ENCODE measurements at regions of chr15 and their contacts with region 1.

Region 1: GRCh38 chr15:40108855-40109735 is at the start of gene BMF:
- DNase-seq: peak; percentile 96
- ATAC-seq: peak; percentile 68
- H3K4me3 ChIP-seq: peak within 1 kb of the TSS; percentile 57 to 88 (median 86)
- H3K4me3 Mint-ChIP-seq: peak within 1 kb of the TSS; percentile 90
- H3K27ac ChIP-seq: peak within 1 kb of the TSS; percentile 97 to 98
- H3K27ac Mint-ChIP-seq: peak within 1 kb of the TSS; percentile 97
- H3K4me1 ChIP-seq: peaks cover 47 to 56% of the 10 kb centered on the region in 2 donors
- H3K4me1 Mint-ChIP-seq: peaks cover 57% of the 10 kb centered on the region
- H3K27me3 ChIP-seq: no peaks in the 10 kb centered on the region
- H3K27me3 Mint-ChIP-seq: no peaks in the 10 kb centered on the region
- CTCF ChIP-seq: peak; percentile 29
- total RNA-seq, gene BMF: 343 and 344 TPM in 2 replicates

Region 2: GRCh38 chr15:40029979-40030893 is 78.9 kb before region 1 on chr15:
- CTCF ChIA-PET with region 1: interaction called, 934 read pairs
- POLR2A ChIA-PET with region 1: interaction called, 5 read pairs
- intact Hi-C with region 1: no loop called
- DNase-seq: peak; percentile 35
- ATAC-seq: peak; percentile 41
- H3K4me3 ChIP-seq: no peak overlapping the region
- H3K4me3 Mint-ChIP-seq: no peak overlapping the region
- H3K27ac ChIP-seq: no peak overlapping the region
- H3K27ac Mint-ChIP-seq: no peak overlapping the region
- H3K4me1 ChIP-seq: no peaks in the 10 kb centered on the region
- H3K4me1 Mint-ChIP-seq: no peaks in the 10 kb centered on the region
- H3K27me3 ChIP-seq: no peaks in the 10 kb centered on the region
- H3K27me3 Mint-ChIP-seq: no peaks in the 10 kb centered on the region
- CTCF ChIP-seq: peak; percentile 55

Region 3: GRCh38 chr15:40054605-40055545 is 54.2 kb before region 1 on chr15:
- CTCF ChIA-PET with region 1: interaction called, 934 read pairs
- POLR2A ChIA-PET with region 1: interaction called, 324 read pairs
- intact Hi-C with region 1: no loop called
- DNase-seq: peak; percentile 68
- ATAC-seq: peak; percentile 77
- H3K4me3 ChIP-seq: no peak overlapping the region
- H3K4me3 Mint-ChIP-seq: peak overlapping the region; percentile 60
- H3K27ac ChIP-seq: peak overlapping the region; percentile 43 to 53
- H3K27ac Mint-ChIP-seq: peak overlapping the region; percentile 94
- H3K4me1 ChIP-seq: peaks cover 43 to 53% of the 10 kb centered on the region in 2 donors
- H3K4me1 Mint-ChIP-seq: peaks cover 63% of the 10 kb centered on the region
- H3K27me3 ChIP-seq: no peaks in the 10 kb centered on the region
- H3K27me3 Mint-ChIP-seq: no peaks in the 10 kb centered on the region
- CTCF ChIP-seq: no peak

Region 4: GRCh38 chr15:40075298-40076044 is 33.6 kb before region 1 on chr15:
- CTCF ChIA-PET with region 1: interaction called, 489 read pairs
- POLR2A ChIA-PET with region 1: interaction called, 43 read pairs
- intact Hi-C with region 1: no loop called
- DNase-seq: no peak
- ATAC-seq: no peak
- H3K4me3 ChIP-seq: no peak overlapping the region
- H3K4me3 Mint-ChIP-seq: no peak overlapping the region
- H3K27ac ChIP-seq: no peak overlapping the region
- H3K27ac Mint-ChIP-seq: no peak overlapping the region
- H3K4me1 ChIP-seq: peaks cover 1 to 12% of the 10 kb centered on the region in 2 donors
- H3K4me1 Mint-ChIP-seq: peaks cover 25% of the 10 kb centered on the region
- H3K27me3 ChIP-seq: no peaks in the 10 kb centered on the region
- H3K27me3 Mint-ChIP-seq: no peaks in the 10 kb centered on the region
- CTCF ChIP-seq: no peak

Region 5: DNA sequence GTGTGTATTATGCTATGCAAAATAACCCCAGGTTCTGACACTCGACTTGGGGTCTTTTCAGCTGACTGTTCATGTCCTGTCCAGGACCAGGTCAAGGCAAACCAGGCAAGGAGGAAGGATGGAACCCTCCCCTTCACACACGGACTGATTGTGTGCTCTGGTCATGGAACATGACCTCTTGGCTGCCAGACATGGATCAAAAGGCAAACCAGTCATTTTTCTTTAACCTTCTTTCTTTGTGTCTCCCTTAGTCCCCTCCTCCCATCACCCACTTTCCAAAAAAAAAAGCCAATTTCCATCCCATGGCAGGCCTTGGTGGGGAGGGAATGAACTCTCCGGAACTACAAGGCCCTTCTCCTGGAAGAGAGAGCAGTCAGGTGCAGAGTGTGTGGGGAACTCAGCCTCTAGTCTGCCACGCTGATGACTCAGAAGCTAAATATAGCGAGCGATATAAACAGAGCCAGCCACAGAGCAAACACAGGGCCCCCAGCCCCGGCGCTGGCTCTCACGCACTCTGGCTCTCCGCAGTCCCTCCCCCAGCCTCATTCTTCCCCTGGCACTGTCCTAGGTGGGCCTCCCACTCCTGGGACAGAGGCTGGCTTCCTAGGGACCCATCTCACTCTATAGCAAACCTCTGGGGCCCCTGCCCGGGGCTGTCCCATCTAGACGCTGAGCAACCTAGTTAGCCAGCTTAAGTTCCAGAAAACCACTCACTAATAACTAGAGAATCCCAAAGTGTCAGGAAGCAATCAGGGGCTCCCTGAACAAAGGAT is 10.4 kb before region 1 on chr15:
- CTCF ChIA-PET with region 1: interaction called, 489 read pairs
- POLR2A ChIA-PET with region 1: interaction called, 130 read pairs
- intact Hi-C with region 1: loop called (anchors 1 kb)
- DNase-seq: peak; percentile 90
- ATAC-seq: peak; percentile 78
- H3K4me3 ChIP-seq: peak overlapping the region in 4 of 5 experiments; percentile 13 to 53 (median 24)
- H3K4me3 Mint-ChIP-seq: peak overlapping the region; percentile 85
- H3K27ac ChIP-seq: peak overlapping the region; percentile 99 to 100
- H3K27ac Mint-ChIP-seq: peak overlapping the region; percentile 95
- H3K4me1 ChIP-seq: peaks cover 100% of the 10 kb centered on the region in 2 donors
- H3K4me1 Mint-ChIP-seq: peaks cover 92% of the 10 kb centered on the region
- H3K27me3 ChIP-seq: no peaks in the 10 kb centered on the region
- H3K27me3 Mint-ChIP-seq: no peaks in the 10 kb centered on the region
- CTCF ChIP-seq: no peak

Region 6: DNA sequence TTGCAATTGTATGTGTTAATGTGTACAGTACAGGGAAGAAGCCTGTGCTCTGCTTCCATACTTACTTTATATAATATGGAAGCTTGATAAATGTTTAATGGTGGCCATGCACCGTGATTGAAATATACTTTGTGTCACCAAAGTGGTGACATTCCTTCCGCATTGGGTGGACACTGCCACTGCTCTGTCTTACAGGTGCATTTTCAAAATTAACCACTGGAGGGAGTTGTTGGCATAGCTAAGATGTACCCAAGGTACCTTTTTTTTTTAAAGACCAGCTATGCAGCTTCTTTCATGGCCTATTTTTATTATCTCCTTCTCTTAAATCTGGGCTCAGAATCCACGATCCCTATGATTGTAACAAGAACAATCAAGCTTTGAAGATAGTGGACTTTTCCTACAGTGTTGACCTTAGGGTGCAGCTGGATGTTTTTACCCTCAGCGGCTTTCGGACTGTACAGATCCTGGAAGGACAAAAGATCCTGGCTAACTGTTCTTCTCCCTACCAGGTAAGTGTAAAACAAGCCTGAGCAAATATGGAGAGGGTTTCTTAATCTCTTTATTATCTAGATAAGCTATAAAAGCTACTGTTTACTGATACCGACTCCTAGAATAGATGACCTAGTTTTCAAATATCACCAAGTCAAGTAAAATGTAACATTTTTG is 108.2 kb after region 1 on chr15:
- CTCF ChIA-PET with region 1: interaction called, 29 read pairs
- POLR2A ChIA-PET with region 1: no interaction called
- intact Hi-C with region 1: loop called (anchors 5 kb)
- DNase-seq: peak; percentile 85
- ATAC-seq: peak; percentile 96
- H3K4me3 ChIP-seq: no peak overlapping the region
- H3K4me3 Mint-ChIP-seq: no peak overlapping the region
- H3K27ac ChIP-seq: no peak overlapping the region
- H3K27ac Mint-ChIP-seq: no peak overlapping the region
- H3K4me1 ChIP-seq: no peaks in the 10 kb centered on the region
- H3K4me1 Mint-ChIP-seq: no peaks in the 10 kb centered on the region
- H3K27me3 ChIP-seq: no peaks in the 10 kb centered on the region
- H3K27me3 Mint-ChIP-seq: no peaks in the 10 kb centered on the region
- CTCF ChIP-seq: peak; percentile 95